Activated CD4-positive, alpha-beta T cell treated with anti-CD3 and anti-CD28 coated beads for 36 hours (primary cell): ENCODE measurements at regions of chr15 and their contacts with region 1.

Region 1: DNA sequence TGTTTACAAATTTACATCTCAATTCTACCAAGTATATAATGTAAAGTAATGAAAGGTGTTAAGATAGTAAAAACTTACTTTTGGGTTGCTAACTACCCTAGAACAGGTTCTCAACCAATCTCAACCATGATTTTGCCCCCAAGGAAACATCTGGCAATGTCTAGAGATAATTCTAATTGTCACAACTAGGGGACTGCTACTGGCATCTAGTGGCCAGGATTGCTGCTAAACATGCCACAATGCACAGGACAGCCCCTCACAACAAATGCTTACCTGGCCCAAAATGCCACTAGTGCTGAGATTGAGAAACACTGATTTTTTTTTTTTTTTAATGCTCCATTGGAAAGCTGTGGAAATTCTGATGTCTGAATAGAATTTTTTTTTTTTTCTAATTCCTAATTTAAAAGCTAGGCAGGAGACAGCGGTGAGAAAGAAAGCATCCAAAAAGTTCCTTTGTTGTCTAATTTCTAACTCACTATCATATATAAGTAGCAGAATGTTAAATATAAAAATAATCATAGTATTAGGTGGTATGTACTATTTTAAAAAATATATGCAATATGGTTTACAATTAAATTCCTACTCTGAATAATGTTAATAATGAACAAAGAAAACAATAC is 81.5 kb downstream of the TJP1 start:
- DNase-seq: peak; percentile 6
- ATAC-seq: no peak
- H3K4me3 Mint-ChIP-seq: no peak overlapping the region
- H3K27ac Mint-ChIP-seq: no peak overlapping the region
- H3K4me1 Mint-ChIP-seq: peaks cover 4% of the 10 kb centered on the region
- H3K27me3 Mint-ChIP-seq: peaks cover 11% of the 10 kb centered on the region

Region 2: GRCh38 chr15:29139540-29140459 is 601.0 kb before region 1 on chr15:
- CTCF ChIA-PET with region 1: interaction called, 3 read pairs
- POLR2A ChIA-PET with region 1: no interaction called
- intact Hi-C with region 1: loop called in 1 of 2 experiments (anchors 5 kb)
- DNase-seq: peak; percentile 78
- ATAC-seq: peak; percentile 83
- H3K4me3 Mint-ChIP-seq: no peak overlapping the region
- H3K27ac Mint-ChIP-seq: no peak overlapping the region
- H3K4me1 Mint-ChIP-seq: peaks cover 2% of the 10 kb centered on the region
- H3K27me3 Mint-ChIP-seq: peaks cover 33% of the 10 kb centered on the region

Region 3: DNA sequence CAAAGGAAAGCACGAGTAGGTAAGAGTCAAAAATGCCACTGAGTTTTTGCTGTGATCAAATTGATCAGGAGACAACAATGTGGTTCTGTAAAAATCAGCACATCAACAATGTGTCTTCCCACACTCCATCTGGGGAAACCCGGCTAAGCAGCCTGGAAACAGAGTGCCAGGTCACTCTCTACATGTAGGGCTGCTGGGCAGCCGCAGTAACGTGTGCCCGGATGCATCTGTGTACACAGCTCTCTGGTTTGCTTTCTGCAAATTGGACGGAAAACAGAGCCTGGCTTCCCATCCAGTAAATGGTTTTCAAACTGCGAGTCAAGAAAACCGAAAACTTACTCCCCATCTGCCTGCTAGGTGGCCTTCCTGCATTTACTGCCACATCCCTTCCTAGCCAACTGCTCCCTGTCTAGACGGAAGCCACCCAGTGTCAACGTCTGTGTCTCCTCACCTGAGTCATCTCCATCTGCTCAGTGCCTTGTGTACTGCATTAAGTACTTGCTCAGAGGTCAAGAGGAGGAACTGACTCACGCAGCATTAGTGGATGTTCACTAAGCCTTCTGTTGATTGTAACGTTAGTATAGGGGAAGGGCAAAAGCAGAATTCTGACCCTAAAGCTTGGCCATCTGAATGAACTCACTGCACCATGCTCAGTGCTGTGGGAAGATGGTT is 42.6 kb before region 1 on chr15:
- CTCF ChIA-PET with region 1: no interaction called
- POLR2A ChIA-PET with region 1: no interaction called
- intact Hi-C with region 1: no loop called
- DNase-seq: no peak
- ATAC-seq: no peak
- H3K4me3 Mint-ChIP-seq: no peak overlapping the region
- H3K27ac Mint-ChIP-seq: no peak overlapping the region
- H3K4me1 Mint-ChIP-seq: no peaks in the 10 kb centered on the region
- H3K27me3 Mint-ChIP-seq: peaks cover 6% of the 10 kb centered on the region